ENCODE measurements at regions of chr10 and their contacts with region 1.

Region 1: DNA sequence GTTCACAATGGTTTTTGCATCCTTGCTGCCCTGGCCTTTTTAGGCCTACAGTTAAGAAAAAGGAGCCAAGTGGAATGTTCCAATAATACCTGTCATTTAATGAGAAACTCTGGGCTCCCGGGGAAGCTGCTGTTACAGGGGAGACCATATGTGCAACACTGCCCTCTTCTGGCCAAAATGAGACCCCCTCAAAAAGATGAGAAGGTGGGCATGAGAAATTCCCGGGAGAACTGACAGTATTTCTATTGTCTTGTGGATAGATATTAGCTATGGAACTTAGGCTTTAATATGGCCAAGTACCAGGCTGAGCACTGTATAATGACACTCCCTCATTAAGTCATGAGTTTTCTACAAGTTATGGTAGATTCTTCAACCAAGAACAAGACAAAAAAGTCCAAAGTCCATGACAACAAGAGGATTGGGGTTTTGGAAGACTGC is 99.4 kb downstream of the CCDC3 start:
- DNase-seq: peak; percentile 64
- H3K4me3 ChIP-seq: no peak overlapping the region
- H3K27ac ChIP-seq: no peak overlapping the region
- H3K4me1 ChIP-seq: no peaks in the 10 kb centered on the region
- H3K27me3 ChIP-seq: no peaks in the 10 kb centered on the region
- CTCF ChIP-seq: peak; percentile 76

Region 2: DNA sequence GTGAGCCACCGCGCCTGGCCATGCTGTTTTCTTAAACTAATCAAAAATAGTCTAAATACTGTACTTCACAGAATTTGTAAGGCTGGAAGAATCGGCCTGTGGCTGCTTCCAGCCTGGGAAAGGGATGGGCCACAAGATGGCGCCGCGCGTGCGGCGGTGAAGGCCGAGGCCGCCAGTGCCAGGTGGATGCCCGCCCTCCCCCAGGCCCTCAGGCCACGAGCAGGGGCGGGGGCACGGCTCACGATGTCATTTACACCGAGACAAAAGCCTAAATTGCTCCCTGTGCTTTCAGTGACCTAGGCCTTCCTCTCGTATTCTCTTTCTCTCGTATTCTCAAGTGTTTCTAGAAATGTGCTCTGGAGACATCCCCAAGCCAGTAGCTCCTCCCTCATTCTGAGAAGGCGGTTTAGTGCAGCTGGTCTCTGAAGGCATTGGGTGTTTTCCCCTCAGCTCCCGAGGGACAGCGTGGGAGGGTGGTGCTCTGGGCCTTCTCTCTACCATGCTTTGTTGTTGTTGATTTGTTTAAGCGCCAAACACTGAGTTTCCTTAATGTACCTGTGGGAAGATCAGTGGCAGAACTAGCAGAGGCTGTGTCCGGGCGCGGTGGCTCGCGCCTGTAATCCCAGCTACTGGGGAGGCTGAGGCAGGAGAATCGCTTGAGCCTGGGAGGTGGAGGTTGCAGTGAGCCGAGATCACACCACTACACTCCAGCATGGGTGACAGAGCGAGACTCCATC is 637.8 kb before region 1 on chr10:
- intact Hi-C with region 1: loop called (anchors 5 kb)
- DNase-seq: peak; percentile 84
- H3K4me3 ChIP-seq: peak overlapping the region; percentile 33
- H3K27ac ChIP-seq: peak overlapping the region; percentile 4
- H3K4me1 ChIP-seq: peaks cover 4% of the 10 kb centered on the region
- H3K27me3 ChIP-seq: no peaks in the 10 kb centered on the region
- CTCF ChIP-seq: peak; percentile 76

Region 3: GRCh38 chr10:12717981-12718707 is 184.0 kb before region 1 on chr10:
- intact Hi-C with region 1: loop called (anchors 5 kb)
- DNase-seq: no peak
- H3K4me3 ChIP-seq: no peak overlapping the region
- H3K27ac ChIP-seq: no peak overlapping the region
- H3K4me1 ChIP-seq: no peaks in the 10 kb centered on the region
- H3K27me3 ChIP-seq: no peaks in the 10 kb centered on the region
- CTCF ChIP-seq: no peak

Region 4: DNA sequence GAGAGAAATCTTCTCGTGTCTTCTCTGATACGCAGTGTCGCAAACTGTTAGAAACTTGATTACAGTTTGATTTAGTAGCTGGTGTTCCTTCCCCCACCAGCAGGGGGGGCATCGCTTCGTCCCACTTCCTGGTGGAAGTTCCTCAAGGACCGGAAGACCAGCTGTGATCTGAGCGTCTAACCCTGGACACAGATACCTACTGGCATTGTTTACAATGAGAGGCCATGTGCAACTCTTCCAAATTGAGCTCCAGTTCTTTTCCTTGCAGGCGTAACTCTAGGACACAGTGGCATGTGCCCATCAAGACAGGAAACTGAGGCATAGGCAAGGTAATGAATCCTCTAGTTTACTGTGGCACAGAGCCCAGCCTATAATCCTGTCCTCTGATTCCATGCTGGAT is 119.6 kb before region 1 on chr10:
- intact Hi-C with region 1: loop called (anchors 5 kb)
- DNase-seq: peak; percentile 57
- H3K4me3 ChIP-seq: no peak overlapping the region
- H3K27ac ChIP-seq: no peak overlapping the region
- H3K4me1 ChIP-seq: no peaks in the 10 kb centered on the region
- H3K27me3 ChIP-seq: no peaks in the 10 kb centered on the region
- CTCF ChIP-seq: peak; percentile 75

Region 5: DNA sequence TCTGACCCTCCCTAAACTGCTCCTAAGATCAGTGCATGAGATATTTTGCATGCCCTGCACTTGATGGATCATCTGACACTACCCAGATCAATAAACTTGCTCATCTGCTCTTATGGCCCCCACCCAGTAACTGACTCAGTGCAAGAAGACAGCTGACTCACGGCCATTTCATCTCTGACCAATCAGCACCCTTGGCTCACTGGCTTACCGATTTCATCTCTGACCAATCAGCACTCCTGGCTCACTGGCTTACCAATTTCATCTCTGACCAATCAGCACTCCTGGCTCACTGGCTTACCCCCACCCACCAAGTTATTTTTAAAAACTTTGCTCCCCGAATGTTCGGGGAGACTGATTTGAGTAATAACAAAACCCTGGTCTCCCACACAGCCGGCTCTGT is 160.6 kb after region 1 on chr10:
- intact Hi-C with region 1: loop called (anchors 10 kb)
- DNase-seq: no peak
- H3K4me3 ChIP-seq: no peak overlapping the region
- H3K27ac ChIP-seq: no peak overlapping the region
- H3K4me1 ChIP-seq: no peaks in the 10 kb centered on the region
- H3K27me3 ChIP-seq: no peaks in the 10 kb centered on the region
- CTCF ChIP-seq: no peak

Measured in colonic mucosa (tissue), 4 donors.